Heart right ventricle (tissue), 16 donors: ENCODE measurements at regions of chr2 and their contacts with region 1.

Region 1: DNA sequence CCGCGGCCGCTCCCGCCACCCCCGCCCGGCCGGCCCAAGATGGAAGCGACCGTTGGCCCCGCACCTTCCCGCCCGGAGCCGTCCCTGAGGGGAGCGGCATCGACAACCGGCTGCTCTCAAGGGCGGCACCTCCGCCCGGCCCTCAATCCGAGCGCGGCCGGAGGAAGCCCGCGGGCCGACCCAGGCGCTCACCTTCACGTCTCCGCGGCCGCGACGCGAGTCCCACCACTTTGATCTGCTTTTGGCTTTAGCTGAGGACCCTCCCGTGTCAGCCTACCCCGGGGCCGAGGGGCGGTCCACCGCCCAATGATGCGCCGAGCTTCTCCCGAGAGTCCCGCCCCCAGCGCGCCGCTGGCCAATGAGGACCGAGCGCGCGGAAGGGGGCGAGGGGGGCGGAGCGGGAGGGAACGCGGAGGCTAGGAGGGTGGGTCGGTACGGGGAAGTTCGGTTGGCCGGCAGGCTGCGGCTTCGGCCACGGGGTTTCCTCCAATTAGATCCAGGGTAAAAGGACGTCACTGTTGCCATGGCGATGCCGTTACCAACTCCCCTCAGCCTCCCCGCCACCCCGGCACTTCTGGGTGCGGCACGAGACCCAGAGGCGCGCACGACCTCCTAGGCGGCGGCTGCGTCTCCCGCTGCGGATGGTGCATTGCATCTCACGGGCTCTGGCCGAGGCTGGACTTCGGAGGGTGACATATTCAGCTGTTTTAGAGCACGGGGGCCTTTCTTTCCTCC is at the start of gene YWHAQ:
- DNase-seq: peak; percentile 99
- ATAC-seq: peak; percentile 96 to 99 (median 98)
- H3K4me3 ChIP-seq: peak within 1 kb of the TSS; percentile 29 to 96 (median 82)
- H3K27ac ChIP-seq: peak within 1 kb of the TSS; percentile 70 to 98 (median 94)
- H3K4me1 ChIP-seq: peaks cover 12 to 63% (median 49%) of the 10 kb centered on the region in 9 donors
- H3K27me3 ChIP-seq: no peaks in the 10 kb centered on the region
- CTCF ChIP-seq: no peak
- total RNA-seq, gene YWHAQ: 134 to 303 (median 207) TPM

Region 2: GRCh38 chr2:9555297-9556141 is 75.4 kb before region 1 on chr2 and contains the start of gene ADAM17:
- intact Hi-C with region 1: loop called in 7 of 10 experiments (anchors 1 to 10 kb)
- DNase-seq: peak; percentile 97
- ATAC-seq: peak; percentile 96 to 98 (median 97)
- H3K4me3 ChIP-seq: peak within 1 kb of the TSS; percentile 69 to 95 (median 86)
- H3K27ac ChIP-seq: peak within 1 kb of the TSS; percentile 95 to 100 (median 99)
- H3K4me1 ChIP-seq: peaks cover 4 to 60% (median 52%) of the 10 kb centered on the region in 9 donors
- H3K27me3 ChIP-seq: no peaks in the 10 kb centered on the region
- CTCF ChIP-seq: peak; percentile 28 to 68 (median 55)
- total RNA-seq, gene ADAM17: 11.4 to 20.0 (median 14.6) TPM

Region 3: DNA sequence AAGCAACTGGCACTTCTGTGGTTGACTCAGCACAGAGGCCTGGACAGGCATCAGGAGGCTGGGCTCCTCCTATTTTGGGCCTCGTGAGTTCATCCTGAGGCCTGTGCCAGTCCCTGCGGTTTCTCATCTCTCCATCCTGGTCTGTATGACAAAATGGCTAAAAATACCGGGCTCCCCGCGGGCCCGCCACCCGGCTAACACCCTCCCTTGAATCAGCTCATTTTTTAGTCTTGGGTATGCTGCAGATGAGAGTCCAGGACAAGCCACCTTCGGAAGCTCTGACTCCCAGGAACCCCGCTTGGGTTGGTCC is 62.2 kb after region 1 on chr2:
- intact Hi-C with region 1: loop called in 2 of 10 experiments (anchors 5 kb)
- DNase-seq: peak; percentile 40 to 75
- ATAC-seq: peak; percentile 83 to 97 (median 94)
- H3K4me3 ChIP-seq: peak overlapping the region in 3 of 10 donors; percentile 17 to 38 (median 32)
- H3K27ac ChIP-seq: peak overlapping the region; percentile 48 to 90 (median 81)
- H3K4me1 ChIP-seq: peaks cover 8 to 33% (median 17%) of the 10 kb centered on the region in 9 donors
- H3K27me3 ChIP-seq: no peaks in the 10 kb centered on the region
- CTCF ChIP-seq: no peak

Region 4: GRCh38 chr2:9757501-9758264 is 126.8 kb after region 1 on chr2:
- intact Hi-C with region 1: loop called in 3 of 10 experiments (anchors 5 to 10 kb)
- DNase-seq: peak in 1 of 2 donors; percentile 76
- ATAC-seq: peak; percentile 55 to 88 (median 80)
- H3K4me3 ChIP-seq: peak overlapping the region; percentile 4 to 48 (median 34)
- H3K27ac ChIP-seq: peak overlapping the region; percentile 1 to 92 (median 70)
- H3K4me1 ChIP-seq: peaks cover 10 to 76% (median 58%) of the 10 kb centered on the region in 9 donors
- H3K27me3 ChIP-seq: peaks cover 0 to 23% (median 0%) of the 10 kb centered on the region in 7 donors
- CTCF ChIP-seq: no peak

Region 5: DNA sequence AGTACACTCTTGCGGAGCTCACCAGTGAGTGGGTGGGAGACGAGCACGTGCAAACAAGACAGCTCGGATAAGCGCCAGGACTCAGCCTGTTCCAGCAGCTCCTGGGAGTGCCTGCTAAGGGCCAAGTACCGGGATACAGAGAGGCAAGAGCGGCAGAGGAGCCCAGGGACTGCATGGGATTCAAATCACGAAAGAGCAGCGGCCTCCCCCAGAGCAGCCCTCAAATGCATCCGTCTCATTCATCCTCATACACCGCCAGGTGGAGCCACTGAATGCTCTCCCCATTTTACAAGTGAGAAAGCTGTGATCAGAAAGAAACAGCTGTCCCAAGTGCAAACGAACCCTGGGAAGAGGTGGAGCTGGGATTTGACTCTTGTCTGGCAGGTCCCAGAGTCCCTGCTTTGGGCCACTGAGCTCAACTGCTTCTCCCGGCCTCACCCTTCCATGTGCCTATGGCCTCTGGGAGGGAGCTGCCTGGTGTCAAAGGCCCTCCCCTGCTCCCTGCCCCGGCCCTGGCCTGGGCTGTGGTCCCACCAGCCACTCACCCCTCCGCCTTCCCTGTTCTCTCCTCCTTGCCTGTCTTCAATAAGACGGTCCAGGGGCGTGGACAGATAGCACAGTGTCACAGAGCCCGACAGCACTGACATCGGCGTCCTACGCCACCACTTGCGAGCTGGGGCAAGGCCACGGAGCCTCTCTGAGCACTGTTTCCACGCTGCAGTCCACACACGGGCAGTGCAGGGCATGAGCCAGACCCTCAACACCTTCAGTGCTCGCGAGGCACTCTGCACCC is 139.6 kb after region 1 on chr2:
- intact Hi-C with region 1: loop called in 2 of 10 experiments (anchors 5 to 10 kb)
- DNase-seq: peak in 1 of 2 donors; percentile 74
- ATAC-seq: peak; percentile 37 to 66 (median 52)
- H3K4me3 ChIP-seq: peak overlapping the region in 3 of 10 donors; percentile 6 to 19 (median 10)
- H3K27ac ChIP-seq: peak overlapping the region in 9 of 10 donors; percentile 13 to 84 (median 74)
- H3K4me1 ChIP-seq: peaks cover 17 to 75% (median 38%) of the 10 kb centered on the region in 9 donors
- H3K27me3 ChIP-seq: no peaks in the 10 kb centered on the region
- CTCF ChIP-seq: peak; percentile 51 to 84 (median 72)